GM12878 (cell line): ENCODE measurements at regions of chr19 and their contacts with region 1.

Region 1: GRCh38 chr19:15466851-15467733 is 2.7 kb upstream of the RASAL3 start:
- DNase-seq: peak; percentile 97
- ATAC-seq: peak; percentile 71
- H3K4me3 ChIP-seq: peak overlapping the region; percentile 17; the same call in 1 of the 2 replicates
- H3K27ac ChIP-seq: peak overlapping the region; percentile 80
- H3K4me1 ChIP-seq: peaks cover 22% of the 10 kb centered on the region
- H3K27me3 ChIP-seq: no peaks in the 10 kb centered on the region
- CTCF ChIP-seq: no peak
- EP300 ChIP-seq: peak in 1 of 2 experiments; percentile 25; a peak in 1 of 4 replicates
- POLR2A ChIP-seq: no peak
- RAD21 ChIP-seq: no peak

Region 2: GRCh38 chr19:15432629-15433518 is 34.2 kb before region 1 on chr19:
- CTCF ChIA-PET with region 1: no interaction called
- POLR2A ChIA-PET with region 1: interaction called, 10 read pairs
- RAD21 ChIA-PET with region 1: interaction called, 5 read pairs
- SMC1A ChIA-PET with region 1: no interaction called
- in situ Hi-C with region 1: no loop called
- intact Hi-C with region 1: no loop called
- DNase-seq: peak; percentile 36
- ATAC-seq: peak; percentile 88
- H3K4me3 ChIP-seq: peak overlapping the region; percentile 94
- H3K27ac ChIP-seq: peak overlapping the region; percentile 83
- H3K4me1 ChIP-seq: peaks cover 10% of the 10 kb centered on the region
- H3K27me3 ChIP-seq: no peaks in the 10 kb centered on the region
- CTCF ChIP-seq: no peak
- EP300 ChIP-seq: no peak; a peak in 1 of 4 replicates
- POLR2A ChIP-seq: peak; percentile 87
- RAD21 ChIP-seq: no peak

Region 3: GRCh38 chr19:15506074-15506571 is 39.0 kb after region 1 on chr19:
- CTCF ChIA-PET with region 1: no interaction called
- POLR2A ChIA-PET with region 1: no interaction called
- RAD21 ChIA-PET with region 1: no interaction called
- SMC1A ChIA-PET with region 1: no interaction called
- in situ Hi-C with region 1: no loop called
- intact Hi-C with region 1: no loop called
- DNase-seq: no peak
- ATAC-seq: no peak
- H3K4me3 ChIP-seq: no peak overlapping the region
- H3K27ac ChIP-seq: no peak overlapping the region
- H3K4me1 ChIP-seq: no peaks in the 10 kb centered on the region
- H3K27me3 ChIP-seq: peaks cover 0 to 2% of the 10 kb centered on the region in 2 experiments; a peak in 2 of 4 replicates
- CTCF ChIP-seq: no peak
- EP300 ChIP-seq: no peak
- POLR2A ChIP-seq: no peak
- RAD21 ChIP-seq: no peak